ENCODE measurements at regions of chr19 and their contacts with region 1.

Region 1: GRCh38 chr19:30649934-30650614 is 277.9 kb downstream of the ZNF536 start:
- ATAC-seq: peak; percentile 39 to 80 (median 48)
- H3K4me3 ChIP-seq: no peak overlapping the region
- H3K27ac ChIP-seq: no peak overlapping the region
- H3K4me1 ChIP-seq: peaks cover 65 to 74% of the 10 kb centered on the region in 2 donors

Region 2: DNA sequence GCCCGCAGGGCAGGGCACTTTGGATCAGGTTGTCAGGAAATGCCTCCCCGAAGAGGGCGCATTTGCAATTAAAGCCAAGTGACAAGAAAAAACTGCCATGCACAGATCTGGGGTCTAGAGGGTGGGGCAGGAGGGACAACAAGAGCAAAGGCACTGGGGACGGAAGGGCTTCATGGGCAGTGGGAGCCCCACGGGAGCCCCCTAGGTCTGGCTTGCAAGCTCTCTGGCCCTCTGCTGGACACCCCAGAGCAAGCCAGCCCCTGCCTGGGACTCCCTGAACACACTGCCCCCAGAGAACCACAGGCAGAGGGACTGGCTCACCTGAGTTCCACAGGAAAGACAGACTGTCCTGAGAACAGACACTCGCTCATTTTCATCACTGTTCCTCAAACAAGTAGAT is 904.8 kb before region 1 on chr19:
- in situ Hi-C with region 1: loop called in 5 of 9 experiments (anchors 25 kb)
- ATAC-seq: peak in 1 of 8 experiments; percentile 52
- H3K4me3 ChIP-seq: no peak overlapping the region
- H3K27ac ChIP-seq: no peak overlapping the region
- H3K4me1 ChIP-seq: no peaks in the 10 kb centered on the region

Region 3: GRCh38 chr19:29771708-29772414 is 878.2 kb before region 1 on chr19:
- in situ Hi-C with region 1: loop called in 2 of 9 experiments (anchors 25 kb)
- ATAC-seq: peak; percentile 34 to 98 (median 60)
- H3K4me3 ChIP-seq: no peak overlapping the region
- H3K27ac ChIP-seq: no peak overlapping the region
- H3K4me1 ChIP-seq: peaks cover 10 to 16% of the 10 kb centered on the region in 2 donors

Region 4: GRCh38 chr19:30222428-30222873 is 427.6 kb before region 1 on chr19:
- in situ Hi-C with region 1: loop called in 4 of 9 experiments (anchors 25 kb)
- ATAC-seq: peak in 3 of 8 experiments; percentile 13 to 25 (median 19)
- H3K4me3 ChIP-seq: peak overlapping the region in 4 of 5 donors; percentile 8 to 63 (median 16)
- H3K27ac ChIP-seq: peak overlapping the region in 1 of 2 donors; percentile 66
- H3K4me1 ChIP-seq: peaks cover 4 to 10% of the 10 kb centered on the region in 2 donors

Region 5: GRCh38 chr19:30227661-30228428 is 422.2 kb before region 1 on chr19:
- in situ Hi-C with region 1: loop called in 4 of 9 experiments (anchors 25 kb)
- ATAC-seq: peak; percentile 58 to 75 (median 59)
- H3K4me3 ChIP-seq: peak overlapping the region; percentile 61 to 94 (median 63)
- H3K27ac ChIP-seq: peak overlapping the region; percentile 70 to 77
- H3K4me1 ChIP-seq: peaks cover 28 to 30% of the 10 kb centered on the region in 2 donors

Region 6: DNA sequence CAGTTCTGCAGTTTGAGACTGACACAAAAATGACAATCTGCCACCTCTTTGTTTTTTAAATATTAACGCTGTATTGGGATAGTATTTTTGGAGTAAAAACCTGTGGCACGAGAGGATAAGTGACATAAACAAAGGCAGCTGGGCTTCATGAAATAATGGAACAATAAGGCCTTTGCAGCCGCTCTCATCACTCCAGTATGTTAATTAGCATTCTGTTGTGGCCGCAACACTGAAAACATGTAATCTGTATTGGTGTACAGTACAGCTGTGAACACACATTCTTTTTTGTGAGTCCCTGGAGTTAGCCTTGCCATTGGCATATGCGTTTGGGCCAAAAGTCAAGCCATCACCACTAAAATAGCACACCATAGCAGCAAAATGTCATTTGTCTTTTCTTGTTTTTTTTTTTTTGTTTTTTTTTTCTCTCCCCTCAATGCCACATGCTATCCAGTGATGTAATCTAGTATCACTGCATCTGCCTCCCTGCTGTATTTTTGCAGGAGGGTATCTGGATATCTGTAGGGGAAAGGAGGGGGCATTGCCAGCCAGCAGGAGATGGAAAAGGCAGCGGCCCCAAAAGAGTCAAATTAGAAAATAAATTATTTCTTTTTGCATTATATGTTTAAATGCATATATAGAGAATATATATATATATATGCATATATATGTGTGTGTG is 278.8 kb before region 1 on chr19:
- in situ Hi-C with region 1: no loop called
- ATAC-seq: peak in 6 of 8 experiments; percentile 20 to 69 (median 48)
- H3K4me3 ChIP-seq: no peak overlapping the region
- H3K27ac ChIP-seq: peak overlapping the region; percentile 9 to 63
- H3K4me1 ChIP-seq: peaks cover 41 to 54% of the 10 kb centered on the region in 2 donors

Region 7: GRCh38 chr19:30703173-30703572 is 53.1 kb after region 1 on chr19:
- in situ Hi-C with region 1: no loop called
- ATAC-seq: no peak
- H3K4me3 ChIP-seq: no peak overlapping the region
- H3K27ac ChIP-seq: no peak overlapping the region
- H3K4me1 ChIP-seq: peaks cover 0 to 3% of the 10 kb centered on the region in 2 donors

Region 8: DNA sequence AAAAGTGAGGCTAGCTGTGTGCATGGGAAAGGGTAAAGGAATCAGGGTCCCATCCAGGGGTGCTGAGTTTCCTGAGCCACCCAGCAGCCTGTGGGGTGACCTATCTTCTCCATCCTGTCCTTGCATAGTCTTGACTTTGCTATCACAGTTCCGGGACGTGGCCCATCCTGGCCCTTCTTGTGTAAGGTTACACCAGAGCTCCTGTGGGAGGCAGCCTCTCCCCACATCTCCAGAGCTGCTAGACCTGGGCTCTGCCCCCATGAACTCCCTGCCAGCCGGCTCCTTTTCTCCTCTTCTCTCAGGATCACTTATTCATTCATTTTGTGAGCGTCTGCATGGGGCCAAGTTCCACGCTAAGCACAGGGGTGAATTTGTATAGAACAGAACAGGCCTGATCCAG is 460.3 kb after region 1 on chr19:
- in situ Hi-C with region 1: no loop called
- ATAC-seq: peak in 6 of 8 experiments; percentile 29 to 76 (median 52)
- H3K4me3 ChIP-seq: no peak overlapping the region
- H3K27ac ChIP-seq: no peak overlapping the region
- H3K4me1 ChIP-seq: peaks cover 8 to 14% of the 10 kb centered on the region in 2 donors

Region 9: DNA sequence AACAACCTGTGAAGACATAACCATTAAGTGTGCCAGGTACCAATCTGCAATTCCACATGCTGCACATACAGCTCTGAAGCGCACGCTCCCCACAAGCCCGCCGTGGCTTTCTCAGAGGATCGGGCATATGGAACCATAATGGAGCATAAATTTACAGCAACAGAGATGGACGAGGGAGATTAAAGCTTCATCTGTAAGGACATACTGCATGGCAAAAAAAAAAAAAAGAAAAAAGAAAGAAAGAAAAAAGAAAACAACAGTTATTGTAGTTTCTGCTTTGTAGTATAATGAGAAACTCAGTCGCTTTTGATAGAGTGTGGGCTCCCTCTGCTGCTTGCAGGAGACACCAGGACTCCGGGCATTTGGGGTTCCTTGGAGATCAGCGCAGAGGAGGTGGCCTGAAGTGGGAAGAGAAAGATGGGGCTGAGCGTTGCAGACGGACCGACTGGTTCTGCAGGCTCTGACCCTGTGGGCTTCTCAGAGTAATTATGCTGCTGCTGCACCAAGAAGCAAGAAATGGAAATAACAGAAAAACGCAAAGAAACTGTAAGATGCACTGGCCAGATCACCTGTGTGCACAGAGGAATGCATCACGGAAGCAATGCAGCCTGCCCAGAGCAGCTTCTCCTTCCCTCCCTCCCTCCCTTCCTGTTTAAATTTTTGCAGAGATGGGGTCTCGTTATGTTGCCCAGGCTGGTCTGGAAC is 1920.2 kb after region 1 on chr19:
- in situ Hi-C with region 1: loop called in 1 of 9 experiments (anchors 25 kb)
- ATAC-seq: peak; percentile 72 to 95 (median 84)
- H3K4me3 ChIP-seq: no peak overlapping the region
- H3K27ac ChIP-seq: no peak overlapping the region
- H3K4me1 ChIP-seq: no peaks in the 10 kb centered on the region

Measured in motor neuron (in vitro differentiated cells).